Activated naive CD4-positive, alpha-beta T cell treated with anti-CD3 and anti-CD28 coated beads for 36 hours (primary cell): ENCODE measurements at regions of chr2 and their contacts with region 1.

Region 1: DNA sequence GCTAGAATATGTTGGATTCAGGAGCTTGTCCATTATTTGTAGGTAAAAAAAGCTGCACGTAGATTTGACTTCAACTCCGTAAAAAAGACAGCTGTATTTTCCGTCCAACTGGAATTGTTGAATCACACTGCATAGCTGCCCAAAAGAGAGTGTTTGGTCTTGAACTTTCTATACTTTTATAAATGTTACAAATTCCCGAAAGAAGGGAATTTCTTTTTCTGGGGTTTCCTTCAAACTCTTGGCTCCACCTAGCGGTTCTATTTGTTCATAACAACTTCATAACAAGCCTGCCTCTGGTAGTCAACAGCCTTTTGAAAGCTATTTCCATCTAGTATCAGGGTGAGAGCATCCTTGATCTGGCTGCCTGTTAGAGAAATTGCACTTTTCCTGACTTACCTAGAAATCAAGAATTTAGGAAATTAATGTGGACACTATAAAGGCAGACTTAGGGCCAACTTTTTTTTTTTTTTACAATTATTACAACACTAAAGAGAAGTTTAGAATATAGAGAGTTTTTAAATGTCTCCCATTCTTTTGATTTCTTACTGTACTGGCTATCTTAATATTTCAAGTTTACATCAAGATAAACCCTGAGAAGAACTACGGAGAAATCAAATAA is 48.1 kb downstream of the TMEM185B start:
- DNase-seq: peak; percentile 28
- H3K4me3 Mint-ChIP-seq: no peak overlapping the region
- H3K27ac Mint-ChIP-seq: peak overlapping the region; percentile 60
- H3K4me1 Mint-ChIP-seq: peaks cover 47% of the 10 kb centered on the region
- H3K27me3 Mint-ChIP-seq: no peaks in the 10 kb centered on the region

Region 2: GRCh38 chr2:119407430-119408220 is 767.4 kb before region 1 on chr2:
- CTCF ChIA-PET with region 1: no interaction called
- intact Hi-C with region 1: loop called (anchors 5 kb)
- DNase-seq: peak; percentile 52
- H3K4me3 Mint-ChIP-seq: no peak overlapping the region
- H3K27ac Mint-ChIP-seq: no peak overlapping the region
- H3K4me1 Mint-ChIP-seq: no peaks in the 10 kb centered on the region
- H3K27me3 Mint-ChIP-seq: peaks cover 2% of the 10 kb centered on the region

Region 3: GRCh38 chr2:119553687-119554344 is 621.3 kb before region 1 on chr2:
- CTCF ChIA-PET with region 1: no interaction called
- intact Hi-C with region 1: no loop called
- DNase-seq: no peak
- H3K4me3 Mint-ChIP-seq: no peak overlapping the region
- H3K27ac Mint-ChIP-seq: no peak overlapping the region
- H3K4me1 Mint-ChIP-seq: no peaks in the 10 kb centered on the region
- H3K27me3 Mint-ChIP-seq: peaks cover 15% of the 10 kb centered on the region

Region 4: GRCh38 chr2:119694845-119695521 is 480.1 kb before region 1 on chr2:
- CTCF ChIA-PET with region 1: interaction called, 7 read pairs
- intact Hi-C with region 1: loop called (anchors 1 kb)
- DNase-seq: peak; percentile 51
- H3K4me3 Mint-ChIP-seq: peak overlapping the region; percentile 32
- H3K27ac Mint-ChIP-seq: no peak overlapping the region
- H3K4me1 Mint-ChIP-seq: peaks cover 48% of the 10 kb centered on the region
- H3K27me3 Mint-ChIP-seq: no peaks in the 10 kb centered on the region

Region 5: DNA sequence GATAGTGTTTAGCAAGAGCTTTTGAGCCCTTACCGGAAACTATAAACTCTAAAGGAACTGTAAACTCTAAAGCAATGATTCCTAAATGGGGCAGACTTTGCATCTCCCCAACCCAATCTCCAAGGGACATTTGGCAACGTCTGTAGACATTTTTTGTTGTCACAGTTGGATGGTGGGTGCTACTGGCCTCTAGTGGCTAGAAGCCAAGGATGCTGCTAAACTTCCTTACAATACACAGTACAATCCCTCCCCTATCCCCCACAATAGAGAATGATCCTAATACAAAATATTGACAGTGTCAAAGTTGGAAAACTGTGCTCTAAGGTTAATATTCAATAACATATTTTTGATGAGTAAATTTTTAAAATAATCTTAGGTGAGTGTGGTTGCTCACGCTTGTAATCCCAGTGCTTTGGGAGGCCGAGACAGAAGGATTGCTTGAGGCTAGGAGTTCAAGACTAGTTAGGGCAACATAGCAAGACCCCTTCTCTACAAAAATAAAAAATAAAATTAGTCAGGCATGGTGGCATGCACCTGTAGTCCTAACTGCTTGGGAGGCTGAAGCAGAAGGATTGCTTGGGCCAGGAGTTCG is 348.6 kb before region 1 on chr2:
- CTCF ChIA-PET with region 1: interaction called, 22 read pairs
- intact Hi-C with region 1: loop called (anchors 1 kb)
- DNase-seq: peak; percentile 58
- H3K4me3 Mint-ChIP-seq: no peak overlapping the region
- H3K27ac Mint-ChIP-seq: no peak overlapping the region
- H3K4me1 Mint-ChIP-seq: peaks cover 43% of the 10 kb centered on the region
- H3K27me3 Mint-ChIP-seq: no peaks in the 10 kb centered on the region

Region 6: DNA sequence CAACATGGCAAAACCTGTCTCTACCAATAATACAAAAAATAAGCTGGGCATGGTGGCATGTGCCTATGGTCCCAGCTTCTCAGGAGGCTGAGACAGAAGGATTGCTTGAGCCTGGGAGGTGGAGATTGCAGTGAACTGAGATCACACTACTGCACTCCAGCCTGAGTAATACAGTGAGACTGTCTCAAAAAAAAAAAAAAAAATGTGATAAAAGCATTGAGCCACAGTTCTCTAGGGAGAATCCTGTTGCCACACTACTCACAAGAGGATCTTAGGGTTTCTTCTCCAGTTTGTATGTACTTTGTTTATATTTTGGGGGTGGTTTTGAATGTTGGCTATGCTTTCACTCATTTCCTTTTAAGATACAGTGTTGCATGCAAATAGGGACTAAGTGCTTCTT is 13.9 kb before region 1 on chr2:
- CTCF ChIA-PET with region 1: interaction called, 25 read pairs
- intact Hi-C with region 1: no loop called
- DNase-seq: no peak
- H3K4me3 Mint-ChIP-seq: no peak overlapping the region
- H3K27ac Mint-ChIP-seq: no peak overlapping the region
- H3K4me1 Mint-ChIP-seq: no peaks in the 10 kb centered on the region
- H3K27me3 Mint-ChIP-seq: no peaks in the 10 kb centered on the region

Region 7: GRCh38 chr2:120287183-120288015 is 112.3 kb after region 1 on chr2:
- CTCF ChIA-PET with region 1: no interaction called
- intact Hi-C with region 1: loop called (anchors 1 kb)
- DNase-seq: peak; percentile 58
- H3K4me3 Mint-ChIP-seq: no peak overlapping the region
- H3K27ac Mint-ChIP-seq: peak overlapping the region; percentile 55
- H3K4me1 Mint-ChIP-seq: peaks cover 23% of the 10 kb centered on the region
- H3K27me3 Mint-ChIP-seq: no peaks in the 10 kb centered on the region